CD4-positive, alpha-beta T cell (primary cell): ENCODE measurements at regions of chr4 and their contacts with region 1.

Region 1: DNA sequence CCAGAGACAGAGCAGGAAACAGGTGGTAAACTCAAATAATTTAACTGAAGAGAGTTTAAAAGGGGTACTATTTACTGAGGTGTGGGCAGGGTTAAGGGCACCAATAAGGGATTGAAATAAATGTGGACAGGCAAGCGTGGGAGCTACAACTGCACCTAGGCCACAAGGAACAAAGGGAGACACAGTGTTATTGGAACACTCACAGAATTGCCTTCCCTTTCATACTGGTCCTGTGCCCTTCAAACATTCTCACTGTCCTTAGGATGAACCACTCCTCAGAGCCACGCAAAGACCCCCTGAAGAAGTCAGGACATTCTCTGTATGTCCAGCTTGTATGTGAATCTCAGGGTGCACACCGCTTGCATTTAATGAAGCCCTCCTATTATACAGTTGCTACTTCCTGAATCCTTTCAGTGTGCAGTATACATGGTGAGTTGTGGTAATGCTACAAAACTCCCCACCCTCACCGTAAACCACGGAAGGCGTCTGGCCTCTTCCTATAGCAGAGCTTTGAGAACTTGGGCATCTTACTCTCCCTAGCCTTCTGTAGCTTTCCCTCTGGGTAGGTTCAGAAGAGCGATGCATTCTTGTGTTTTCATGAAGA is 9.6 kb upstream of the MRPL1 start:
- DNase-seq: peak; percentile 42 to 92 (median 56)
- ATAC-seq: peak; percentile 83
- H3K4me3 ChIP-seq: peak overlapping the region; percentile 31
- H3K4me3 Mint-ChIP-seq: peak overlapping the region; percentile 74
- H3K27ac ChIP-seq: peak overlapping the region; percentile 58 to 94
- H3K27ac Mint-ChIP-seq: peak overlapping the region; percentile 95
- H3K4me1 ChIP-seq: peaks cover 40% of the 10 kb centered on the region
- H3K4me1 Mint-ChIP-seq: peaks cover 53% of the 10 kb centered on the region
- H3K27me3 ChIP-seq: no peaks in the 10 kb centered on the region
- H3K27me3 Mint-ChIP-seq: no peaks in the 10 kb centered on the region
- CTCF ChIP-seq: no peak

Region 2: DNA sequence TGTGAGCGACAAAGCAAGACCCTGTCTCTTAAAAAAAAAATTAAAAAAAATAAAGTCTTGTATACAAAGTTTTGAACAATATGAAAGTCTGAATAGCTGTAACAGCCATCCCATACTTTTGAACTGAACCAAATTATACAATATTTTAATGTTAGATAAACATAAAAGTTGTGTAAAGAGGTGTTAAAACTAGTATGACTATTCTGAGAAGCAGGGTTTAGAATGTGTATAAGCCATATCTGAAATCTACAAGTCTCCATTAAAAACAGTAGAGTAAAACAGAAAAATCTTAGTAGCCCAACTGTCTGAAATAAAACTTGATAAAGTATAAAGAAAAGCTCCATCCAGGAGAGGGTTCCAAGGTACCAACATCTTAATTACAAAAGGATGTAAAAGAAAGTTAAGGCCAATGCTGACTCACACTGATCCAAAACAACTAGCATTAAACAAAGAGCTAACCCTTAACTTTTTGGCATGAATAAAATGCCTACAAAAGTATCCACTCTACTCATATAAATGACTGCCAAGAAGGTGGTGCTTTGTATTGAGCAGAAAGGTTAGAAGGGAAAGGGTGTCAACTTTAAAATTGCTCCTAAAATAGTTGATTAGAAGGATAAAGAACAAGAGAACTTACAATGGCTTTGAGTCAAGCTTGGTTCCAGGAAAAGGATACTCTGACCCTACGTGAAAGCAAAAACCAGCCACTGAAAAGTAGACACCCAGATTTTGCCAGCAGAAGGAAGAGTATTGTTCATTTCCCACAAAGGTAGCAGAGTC is 52.3 kb before region 1 on chr4:
- CTCF ChIA-PET with region 1: no interaction called
- POLR2A ChIA-PET with region 1: interaction called, 12 read pairs
- intact Hi-C with region 1: no loop called
- DNase-seq: no peak
- ATAC-seq: peak; percentile 3
- H3K4me3 ChIP-seq: peak overlapping the region; percentile 33
- H3K4me3 Mint-ChIP-seq: peak overlapping the region; percentile 75
- H3K27ac ChIP-seq: peak overlapping the region in 1 of 2 donors; percentile 73
- H3K27ac Mint-ChIP-seq: peak overlapping the region; percentile 77
- H3K4me1 ChIP-seq: peaks cover 33% of the 10 kb centered on the region
- H3K4me1 Mint-ChIP-seq: peaks cover 88% of the 10 kb centered on the region
- H3K27me3 ChIP-seq: no peaks in the 10 kb centered on the region
- H3K27me3 Mint-ChIP-seq: no peaks in the 10 kb centered on the region
- CTCF ChIP-seq: no peak

Region 3: GRCh38 chr4:77827343-77827742 is 25.7 kb before region 1 on chr4:
- CTCF ChIA-PET with region 1: interaction called, 3 read pairs
- POLR2A ChIA-PET with region 1: interaction called, 1,450 read pairs
- intact Hi-C with region 1: loop called in 1 of 2 experiments (anchors 2 kb)
- DNase-seq: peak in 4 of 14 experiments; percentile 18 to 75 (median 39)
- ATAC-seq: peak; percentile 91
- H3K4me3 ChIP-seq: no peak overlapping the region
- H3K4me3 Mint-ChIP-seq: peak overlapping the region; percentile 32
- H3K27ac ChIP-seq: peak overlapping the region; percentile 16 to 66
- H3K27ac Mint-ChIP-seq: peak overlapping the region; percentile 75
- H3K4me1 ChIP-seq: peaks cover 37% of the 10 kb centered on the region
- H3K4me1 Mint-ChIP-seq: peaks cover 56% of the 10 kb centered on the region
- H3K27me3 ChIP-seq: no peaks in the 10 kb centered on the region
- H3K27me3 Mint-ChIP-seq: no peaks in the 10 kb centered on the region
- CTCF ChIP-seq: no peak

Region 4: GRCh38 chr4:77881460-77882278 is 28.7 kb after region 1 on chr4:
- CTCF ChIA-PET with region 1: no interaction called
- POLR2A ChIA-PET with region 1: no interaction called
- intact Hi-C with region 1: loop called in 1 of 2 experiments (anchors 1 kb)
- DNase-seq: no peak
- ATAC-seq: no peak
- H3K4me3 ChIP-seq: no peak overlapping the region
- H3K4me3 Mint-ChIP-seq: no peak overlapping the region
- H3K27ac ChIP-seq: no peak overlapping the region
- H3K27ac Mint-ChIP-seq: no peak overlapping the region
- H3K4me1 ChIP-seq: no peaks in the 10 kb centered on the region
- H3K4me1 Mint-ChIP-seq: peaks cover 25% of the 10 kb centered on the region
- H3K27me3 ChIP-seq: no peaks in the 10 kb centered on the region
- H3K27me3 Mint-ChIP-seq: no peaks in the 10 kb centered on the region
- CTCF ChIP-seq: no peak

Region 5: GRCh38 chr4:78100060-78100459 is 247.1 kb after region 1 on chr4:
- CTCF ChIA-PET with region 1: no interaction called
- POLR2A ChIA-PET with region 1: no interaction called
- intact Hi-C with region 1: no loop called
- DNase-seq: no peak
- ATAC-seq: no peak
- H3K4me3 ChIP-seq: no peak overlapping the region
- H3K4me3 Mint-ChIP-seq: no peak overlapping the region
- H3K27ac ChIP-seq: no peak overlapping the region
- H3K27ac Mint-ChIP-seq: no peak overlapping the region
- H3K4me1 ChIP-seq: no peaks in the 10 kb centered on the region
- H3K4me1 Mint-ChIP-seq: no peaks in the 10 kb centered on the region
- H3K27me3 ChIP-seq: no peaks in the 10 kb centered on the region
- H3K27me3 Mint-ChIP-seq: peaks cover 14% of the 10 kb centered on the region
- CTCF ChIP-seq: no peak